ENCODE measurements at regions of chr6 and their contacts with region 1.

Region 1: GRCh38 chr6:76134651-76135050 is 62.2 kb upstream of the IMPG1 start:
- DNase-seq: no peak
- CTCF ChIP-seq: no peak

Region 2: DNA sequence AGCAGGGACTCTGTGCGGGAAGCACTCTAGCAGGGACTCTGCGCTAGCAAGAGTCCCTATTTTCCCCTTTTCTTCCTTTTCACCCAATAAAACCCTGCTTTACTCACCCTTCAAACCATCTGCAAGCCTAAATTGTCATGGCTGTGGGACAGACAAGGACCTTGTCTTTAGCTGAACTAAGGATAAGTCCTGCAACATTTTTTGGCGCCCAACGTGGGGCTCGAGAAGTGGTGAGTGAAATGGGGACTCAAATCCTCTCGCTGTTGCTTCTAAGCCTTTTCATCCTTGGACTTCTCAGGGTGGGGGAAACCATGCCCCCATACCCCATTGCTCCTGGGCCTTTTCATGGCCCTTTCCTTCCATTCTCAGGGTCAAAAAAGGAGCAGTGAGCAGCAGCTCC is 108.5 kb before region 1 on chr6:
- in situ Hi-C with region 1: loop called (anchors 25 kb)
- DNase-seq: no peak
- CTCF ChIP-seq: no peak

Region 3: GRCh38 chr6:76230711-76231110 is 96.1 kb after region 1 on chr6:
- in situ Hi-C with region 1: no loop called
- DNase-seq: no peak
- CTCF ChIP-seq: no peak

Region 4: GRCh38 chr6:76631616-76632015 is 497.0 kb after region 1 on chr6:
- in situ Hi-C with region 1: no loop called
- DNase-seq: no peak
- CTCF ChIP-seq: no peak

Region 5: DNA sequence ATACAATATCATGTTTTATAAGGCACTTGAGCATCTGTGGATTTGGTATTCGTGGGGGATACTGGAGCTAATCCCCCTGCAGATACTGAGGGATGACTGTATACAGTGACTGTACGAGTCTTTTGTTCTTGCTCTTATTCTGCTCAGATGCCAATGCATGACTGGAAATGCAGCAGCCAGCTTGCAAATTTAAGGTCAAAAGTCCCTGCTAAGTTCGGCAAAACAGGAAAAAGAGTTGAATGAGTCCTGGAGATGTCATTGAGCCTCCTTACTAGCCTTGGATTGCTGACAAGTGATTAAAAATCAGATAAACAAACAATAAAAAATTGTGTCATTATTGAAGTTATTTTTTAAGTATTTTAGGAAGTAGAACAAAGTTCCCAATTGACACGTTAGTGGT is 537.1 kb after region 1 on chr6:
- in situ Hi-C with region 1: no loop called
- DNase-seq: no peak
- CTCF ChIP-seq: no peak